ENCODE measurements at regions of chr11 and their contacts with region 1.

Region 1: GRCh38 chr11:12224537-12224893 is 114.1 kb downstream of the MICAL2 start:
- DNase-seq: peak; percentile 53 to 95 (median 88)
- ATAC-seq: peak; percentile 95 to 96
- H3K4me3 Mint-ChIP-seq: peak overlapping the region; percentile 61 to 93 (median 80)
- H3K27ac Mint-ChIP-seq: peak overlapping the region; percentile 82 to 96 (median 94)
- H3K4me1 Mint-ChIP-seq: peaks cover 31 to 60% (median 49%) of the 10 kb centered on the region in 4 donors
- H3K27me3 Mint-ChIP-seq: no peaks in the 10 kb centered on the region

Region 2: DNA sequence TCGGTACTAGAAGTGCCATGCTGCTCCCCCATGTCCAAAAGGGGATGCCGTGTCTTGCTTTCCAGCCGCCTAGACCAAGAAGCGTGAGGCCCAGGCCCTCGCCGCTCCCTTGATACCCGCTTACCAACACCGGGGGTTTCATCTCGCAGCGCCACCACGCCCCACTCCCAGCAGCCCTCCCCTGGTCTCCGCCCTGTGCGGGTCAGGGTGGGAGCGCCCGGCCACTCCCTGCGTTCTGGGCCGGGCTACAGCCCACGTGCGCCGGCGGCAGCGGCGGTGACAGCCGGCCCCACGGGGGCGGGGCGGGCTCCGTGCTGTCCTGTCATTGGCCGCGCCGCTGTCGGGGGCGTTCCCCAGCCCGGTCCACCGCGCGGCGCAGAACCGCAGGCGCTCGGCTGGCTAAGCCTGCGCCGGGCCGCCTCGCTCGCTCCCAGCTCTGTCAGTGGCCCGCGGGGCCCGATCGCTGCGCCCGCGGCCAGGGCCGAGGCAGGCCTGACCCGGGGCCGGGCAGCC is 114.3 kb before region 1 on chr11 and contains the start of gene MICAL2:
- POLR2A ChIA-PET with region 1: no interaction called
- DNase-seq: peak; percentile 69 to 85 (median 78)
- ATAC-seq: peak; percentile 95 to 97
- H3K4me3 Mint-ChIP-seq: peak within 1 kb of the TSS; percentile 70 to 87 (median 82)
- H3K27ac Mint-ChIP-seq: peak within 1 kb of the TSS in 8 of 10 donors; percentile 11 to 85 (median 70)
- H3K4me1 Mint-ChIP-seq: peaks cover 5 to 27% (median 17%) of the 10 kb centered on the region in 4 donors
- H3K27me3 Mint-ChIP-seq: no peaks in the 10 kb centered on the region
- polyA plus RNA-seq, gene MICAL2: 2.3 to 12.3 (median 2.8) TPM

Region 3: DNA sequence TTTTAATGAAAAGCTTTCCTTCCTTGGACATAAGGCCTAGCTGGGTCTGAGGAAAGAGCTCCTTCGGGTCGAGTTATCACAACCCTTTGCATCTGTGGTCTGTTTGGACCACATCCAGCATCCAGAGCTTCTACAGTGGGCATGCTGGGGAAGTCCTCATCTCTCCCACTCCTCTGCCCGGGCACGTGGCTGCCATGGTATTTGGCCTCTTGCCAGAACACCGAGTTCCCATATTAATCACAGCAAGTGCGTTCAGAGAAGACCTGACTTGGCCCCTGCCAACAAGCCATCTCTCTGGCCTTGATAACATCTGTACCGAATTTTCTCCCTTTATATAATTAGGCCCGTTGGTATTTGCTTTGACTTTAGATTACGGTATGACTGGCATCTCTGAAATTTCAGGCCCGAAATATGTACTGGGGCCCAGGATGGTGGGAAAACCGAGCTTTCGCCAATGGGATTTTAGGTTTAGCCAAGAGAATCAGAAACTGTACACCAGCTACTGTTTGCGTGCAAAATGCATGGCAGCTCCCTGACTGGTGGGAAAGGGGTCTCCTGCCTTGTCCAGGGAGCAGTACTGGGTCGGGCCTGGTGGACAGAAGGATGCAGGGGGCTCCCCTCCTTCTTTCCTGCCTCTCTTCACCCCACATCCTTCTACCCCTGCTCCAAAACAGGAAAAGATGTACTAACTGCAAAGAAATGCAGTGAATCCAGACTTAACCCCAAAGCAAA is 24.1 kb before region 1 on chr11:
- POLR2A ChIA-PET with region 1: interaction called, 26 read pairs
- DNase-seq: no peak
- ATAC-seq: no peak
- H3K4me3 Mint-ChIP-seq: no peak overlapping the region
- H3K27ac Mint-ChIP-seq: peak overlapping the region in 6 of 10 donors; percentile 2 to 91 (median 62)
- H3K4me1 Mint-ChIP-seq: peaks cover 30 to 60% (median 47%) of the 10 kb centered on the region in 4 donors
- H3K27me3 Mint-ChIP-seq: no peaks in the 10 kb centered on the region

Region 4: DNA sequence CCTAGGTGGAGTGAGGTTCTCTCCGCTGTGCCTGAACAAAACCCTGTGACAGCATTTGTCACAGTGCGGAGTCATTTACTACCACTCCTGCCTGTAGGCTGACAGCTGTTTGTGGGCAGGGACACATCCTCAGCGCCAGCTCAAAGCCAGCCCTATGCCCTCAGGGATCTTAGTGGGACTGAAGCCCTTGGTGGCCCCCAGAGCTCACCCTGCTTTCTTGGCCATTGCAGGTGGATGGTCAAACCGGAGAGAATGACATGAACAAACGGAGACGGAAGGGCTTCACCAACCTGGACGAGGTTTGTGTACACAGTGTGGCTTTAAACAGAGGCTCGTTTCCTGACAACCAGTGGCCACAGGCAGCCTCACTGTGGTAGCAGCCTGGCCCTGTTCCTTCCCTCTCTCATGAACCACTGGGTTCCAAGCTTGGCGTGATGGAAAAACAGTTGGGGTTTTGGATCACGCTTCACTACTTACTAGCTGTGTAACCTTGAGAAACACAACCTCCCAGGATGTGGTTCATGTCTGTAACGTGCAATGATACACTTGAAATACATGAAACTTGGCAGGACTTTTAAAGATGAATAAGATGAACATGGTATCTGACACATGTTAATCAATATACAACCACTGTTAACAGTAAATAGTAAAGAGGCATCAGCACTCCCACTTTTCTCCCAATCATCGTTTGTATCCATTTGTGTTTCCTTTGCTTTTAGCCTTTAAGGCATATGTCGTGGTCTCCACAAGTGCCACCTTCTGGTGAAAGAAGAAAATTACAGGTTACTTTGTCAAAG is 11.6 kb after region 1 on chr11:
- POLR2A ChIA-PET with region 1: interaction called, 22 read pairs
- DNase-seq: peak in 7 of 10 donors; percentile 6 to 79 (median 73)
- ATAC-seq: peak; percentile 86 to 87
- H3K4me3 Mint-ChIP-seq: peak overlapping the region; percentile 5 to 82 (median 70)
- H3K27ac Mint-ChIP-seq: peak overlapping the region; percentile 20 to 93 (median 86)
- H3K4me1 Mint-ChIP-seq: peaks cover 13 to 23% (median 22%) of the 10 kb centered on the region in 4 donors
- H3K27me3 Mint-ChIP-seq: no peaks in the 10 kb centered on the region

Measured in naive thymus-derived CD8-positive, alpha-beta T cell (primary cell).